HEK293 (cell line): ENCODE measurements at regions of chr6 and their contacts with region 1.

Region 1: GRCh38 chr6:53691667-53692133 is 26.1 kb upstream of the KLHL31 start:
- H3K4me3 ChIP-seq: no peak overlapping the region
- H3K27ac ChIP-seq: no peak overlapping the region
- H3K4me1 ChIP-seq: peaks cover 3% of the 10 kb centered on the region; the same call in 1 of the 2 replicates
- CTCF ChIP-seq: no peak

Region 2: DNA sequence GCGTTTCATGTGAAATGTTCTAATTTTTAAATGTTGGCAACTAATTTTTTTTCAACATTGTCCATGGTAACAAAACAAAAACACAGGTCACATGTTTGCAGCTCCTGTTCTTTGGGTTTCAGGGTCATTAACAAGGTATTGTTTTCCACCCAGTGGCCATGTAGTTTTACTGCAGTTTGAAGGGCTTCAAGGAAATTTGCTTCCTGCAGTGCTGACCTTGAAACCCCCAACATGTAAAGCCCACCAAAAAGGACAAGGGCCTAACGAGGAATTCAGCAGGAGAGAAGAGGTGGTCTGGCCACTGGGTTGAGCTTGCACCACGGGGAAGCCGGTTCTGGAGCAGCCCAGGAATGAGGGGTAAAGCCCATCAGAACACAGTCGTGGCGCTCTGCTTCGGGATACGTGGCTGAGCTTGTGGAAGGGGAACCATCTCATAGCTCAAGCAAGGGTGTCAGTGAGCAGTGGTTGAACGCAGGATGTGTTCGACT is 12.2 kb before region 1 on chr6:
- CTCF ChIA-PET with region 1: interaction called, 10 read pairs
- POLR2A ChIA-PET with region 1: no interaction called
- H3K4me3 ChIP-seq: no peak overlapping the region
- H3K27ac ChIP-seq: no peak overlapping the region
- H3K4me1 ChIP-seq: no peaks in the 10 kb centered on the region
- CTCF ChIP-seq: no peak

Region 3: DNA sequence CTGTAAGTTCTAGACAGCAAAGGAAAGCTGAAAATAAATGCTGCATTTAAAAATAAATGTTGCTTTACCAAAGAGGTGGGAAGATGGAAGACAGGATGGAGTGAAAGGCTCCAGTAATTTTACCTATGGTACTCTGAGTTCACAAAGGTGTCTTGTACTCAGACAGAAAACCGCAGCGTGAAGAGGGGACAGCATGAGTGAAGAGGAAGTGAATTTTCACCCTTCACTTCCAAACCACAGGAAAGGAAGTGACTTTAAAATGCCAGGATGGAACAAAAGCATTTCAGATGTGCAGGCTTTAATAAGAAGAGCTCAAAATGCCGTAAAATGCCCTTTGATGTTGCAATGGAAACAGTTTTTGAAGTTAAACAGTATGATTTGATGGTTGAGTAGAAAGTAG is 525.3 kb after region 1 on chr6:
- CTCF ChIA-PET with region 1: no interaction called
- POLR2A ChIA-PET with region 1: no interaction called
- H3K4me3 ChIP-seq: no peak overlapping the region
- H3K27ac ChIP-seq: no peak overlapping the region
- H3K4me1 ChIP-seq: no peaks in the 10 kb centered on the region
- CTCF ChIP-seq: no peak